ENCODE measurements at regions of chr11 and their contacts with region 1.

Region 1: DNA sequence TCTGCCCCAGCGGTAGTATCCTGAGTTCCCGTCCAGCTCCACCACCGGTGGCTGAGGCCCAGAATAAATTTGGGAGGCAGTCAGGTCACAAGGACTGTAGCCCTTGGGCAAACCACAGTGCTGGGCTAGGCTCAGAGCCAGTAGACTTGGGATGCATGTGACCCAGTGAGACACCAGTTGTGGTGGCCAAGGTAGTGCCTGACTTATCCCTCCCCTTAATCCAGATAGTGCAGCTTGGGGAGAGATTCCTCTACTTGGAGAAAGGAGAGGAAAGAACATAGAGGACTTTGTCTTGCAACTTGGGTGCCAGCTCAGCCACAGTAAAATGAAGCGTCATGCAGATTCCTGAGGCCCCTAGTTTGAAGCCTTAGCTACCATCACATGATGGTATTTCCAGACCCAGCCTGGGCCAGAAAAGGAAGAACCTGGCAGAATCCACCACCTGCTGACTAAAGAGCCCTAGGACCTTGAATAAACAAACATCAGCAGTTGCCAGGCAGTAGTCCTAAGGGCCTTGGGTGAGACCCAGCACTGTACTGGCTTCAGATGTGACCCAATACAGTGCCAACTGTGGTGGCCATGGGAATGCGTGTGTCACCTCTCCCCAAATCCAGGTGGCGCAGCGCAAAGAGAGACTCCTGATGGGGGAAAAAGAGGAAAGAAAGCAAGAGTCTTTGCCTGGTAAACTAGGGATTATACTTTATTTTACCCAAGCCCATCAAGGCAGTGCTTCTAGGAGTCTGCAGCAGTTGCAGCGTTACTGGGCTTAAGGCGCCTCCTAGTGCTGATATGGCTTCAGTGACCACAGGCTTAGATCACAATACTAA is 17.0 kb upstream of the DDX10 start:
- DNase-seq: no peak
- ATAC-seq: peak; percentile 98
- H3K4me3 ChIP-seq: no peak overlapping the region
- H3K27ac ChIP-seq: no peak overlapping the region
- H3K4me1 ChIP-seq: no peaks in the 10 kb centered on the region
- H3K27me3 ChIP-seq: no peaks in the 10 kb centered on the region
- CTCF ChIP-seq: peak; percentile 86 to 88 (median 86)
- EP300 ChIP-seq: no peak
- POLR2A ChIP-seq: no peak
- RAD21 ChIP-seq: peak; percentile 99

Region 2: GRCh38 chr11:108222686-108223448 is 425.0 kb before region 1 on chr11 and contains the start of gene ATM:
- CTCF ChIA-PET with region 1: interaction called, 5 read pairs
- POLR2A ChIA-PET with region 1: no interaction called
- RAD21 ChIA-PET with region 1: interaction called, 11 read pairs
- SMC1A ChIA-PET with region 1: interaction called, 4 read pairs
- in situ Hi-C with region 1: no loop called
- intact Hi-C with region 1: no loop called
- DNase-seq: peak; percentile 99
- ATAC-seq: peak; percentile 88
- H3K4me3 ChIP-seq: peak within 1 kb of the TSS; percentile 97
- H3K27ac ChIP-seq: peak within 1 kb of the TSS; percentile 99
- H3K4me1 ChIP-seq: peaks cover 19% of the 10 kb centered on the region
- H3K27me3 ChIP-seq: no peaks in the 10 kb centered on the region
- CTCF ChIP-seq: peak; percentile 85 to 96 (median 88)
- EP300 ChIP-seq: peak in 1 of 2 experiments; percentile 50; a peak in 2 of 4 replicates
- POLR2A ChIP-seq: peak; percentile 74
- RAD21 ChIP-seq: peak; percentile 81
- polyA plus RNA-seq, gene ATM: 10.0 to 10.5 TPM

Region 3: GRCh38 chr11:108467091-108467823 is 180.7 kb before region 1 on chr11 and contains the start of gene C11orf65:
- CTCF ChIA-PET with region 1: interaction called, 6 read pairs
- POLR2A ChIA-PET with region 1: no interaction called
- RAD21 ChIA-PET with region 1: interaction called, 4 read pairs
- SMC1A ChIA-PET with region 1: interaction called, 6 read pairs
- in situ Hi-C with region 1: no loop called
- intact Hi-C with region 1: loop called (anchors 2 kb)
- DNase-seq: peak; percentile 96
- ATAC-seq: peak; percentile 99
- H3K4me3 ChIP-seq: peak within 1 kb of the TSS; percentile 74
- H3K27ac ChIP-seq: peak within 1 kb of the TSS; percentile 93
- H3K4me1 ChIP-seq: no peaks in the 10 kb centered on the region
- H3K27me3 ChIP-seq: no peaks in the 10 kb centered on the region
- CTCF ChIP-seq: no peak
- EP300 ChIP-seq: 0 out of 4 replicates have a peak, but pooled peaks of 1 of the 2 experiments have one; percentile 4
- POLR2A ChIP-seq: peak; percentile 95
- RAD21 ChIP-seq: no peak
- polyA plus RNA-seq, gene C11orf65: 1.4 to 1.5 TPM

Region 4: GRCh38 chr11:108586600-108586999 is 61.3 kb before region 1 on chr11:
- CTCF ChIA-PET with region 1: interaction called, 58 read pairs
- POLR2A ChIA-PET with region 1: interaction called, 8 read pairs
- RAD21 ChIA-PET with region 1: interaction called, 102 read pairs
- SMC1A ChIA-PET with region 1: interaction called, 79 read pairs
- in situ Hi-C with region 1: no loop called
- intact Hi-C with region 1: loop called (anchors 2 kb)
- DNase-seq: no peak
- ATAC-seq: no peak
- H3K4me3 ChIP-seq: no peak overlapping the region
- H3K27ac ChIP-seq: no peak overlapping the region
- H3K4me1 ChIP-seq: peaks cover 11% of the 10 kb centered on the region
- H3K27me3 ChIP-seq: no peaks in the 10 kb centered on the region
- CTCF ChIP-seq: no peak
- EP300 ChIP-seq: no peak
- POLR2A ChIP-seq: no peak
- RAD21 ChIP-seq: no peak

Region 5: DNA sequence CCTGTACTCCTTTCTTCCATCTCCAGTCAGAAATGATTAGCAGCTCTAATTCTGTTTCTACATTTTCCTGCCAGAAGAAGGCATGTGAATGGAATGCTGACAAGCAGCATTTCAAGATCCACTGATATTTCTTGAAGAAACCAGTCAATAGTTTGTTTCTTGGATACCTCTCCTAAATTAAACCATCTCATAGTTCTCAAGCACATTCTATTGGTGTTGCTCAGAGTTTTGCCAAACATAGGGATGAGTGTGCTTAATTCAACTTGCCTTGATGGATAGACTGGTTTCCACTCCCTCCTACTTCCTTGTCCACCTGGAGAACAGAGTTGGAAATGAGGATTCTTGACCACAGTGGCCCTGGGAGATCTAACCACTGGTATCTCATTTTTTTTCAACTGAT is 12.8 kb before region 1 on chr11:
- CTCF ChIA-PET with region 1: interaction called, 45 read pairs
- POLR2A ChIA-PET with region 1: interaction called, 6 read pairs
- RAD21 ChIA-PET with region 1: interaction called, 14 read pairs
- SMC1A ChIA-PET with region 1: interaction called, 130 read pairs
- in situ Hi-C with region 1: no loop called
- intact Hi-C with region 1: no loop called
- DNase-seq: no peak
- ATAC-seq: no peak
- H3K4me3 ChIP-seq: no peak overlapping the region
- H3K27ac ChIP-seq: no peak overlapping the region
- H3K4me1 ChIP-seq: no peaks in the 10 kb centered on the region
- H3K27me3 ChIP-seq: no peaks in the 10 kb centered on the region
- CTCF ChIP-seq: no peak
- EP300 ChIP-seq: no peak
- POLR2A ChIP-seq: no peak
- RAD21 ChIP-seq: no peak